ENCODE measurements at regions of chr2 and their contacts with region 1.

Region 1: DNA sequence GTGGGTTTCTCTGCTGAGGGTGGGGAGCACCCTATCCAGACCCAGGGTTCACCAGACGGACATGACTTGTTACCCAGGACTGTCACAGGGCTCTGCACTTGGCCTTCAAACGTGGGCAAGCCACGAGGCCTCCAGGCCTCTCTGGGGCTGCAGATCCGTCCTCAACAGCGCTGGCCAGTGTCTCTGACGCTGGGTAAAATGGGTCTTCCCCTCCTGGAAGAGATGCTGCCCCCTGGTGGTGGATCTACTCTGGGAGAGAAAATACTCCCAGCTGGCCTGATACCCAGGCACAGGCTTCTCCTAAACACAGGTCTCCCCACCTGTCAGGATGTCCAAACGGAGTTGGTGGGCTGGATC is 3.7 kb downstream of the GPR17 start:
- DNase-seq: peak; percentile 74 to 94 (median 83)
- ATAC-seq: peak; percentile 81
- H3K4me3 ChIP-seq: no peak overlapping the region
- H3K4me3 Mint-ChIP-seq: peak overlapping the region; percentile 51
- H3K27ac ChIP-seq: no peak overlapping the region
- H3K27ac Mint-ChIP-seq: peak overlapping the region; percentile 71
- H3K4me1 ChIP-seq: peaks cover 8% of the 10 kb centered on the region
- H3K4me1 Mint-ChIP-seq: peaks cover 21% of the 10 kb centered on the region
- H3K27me3 ChIP-seq: no peaks in the 10 kb centered on the region
- H3K27me3 Mint-ChIP-seq: peaks cover 1% of the 10 kb centered on the region
- CTCF ChIP-seq: peak; percentile 89

Region 2: DNA sequence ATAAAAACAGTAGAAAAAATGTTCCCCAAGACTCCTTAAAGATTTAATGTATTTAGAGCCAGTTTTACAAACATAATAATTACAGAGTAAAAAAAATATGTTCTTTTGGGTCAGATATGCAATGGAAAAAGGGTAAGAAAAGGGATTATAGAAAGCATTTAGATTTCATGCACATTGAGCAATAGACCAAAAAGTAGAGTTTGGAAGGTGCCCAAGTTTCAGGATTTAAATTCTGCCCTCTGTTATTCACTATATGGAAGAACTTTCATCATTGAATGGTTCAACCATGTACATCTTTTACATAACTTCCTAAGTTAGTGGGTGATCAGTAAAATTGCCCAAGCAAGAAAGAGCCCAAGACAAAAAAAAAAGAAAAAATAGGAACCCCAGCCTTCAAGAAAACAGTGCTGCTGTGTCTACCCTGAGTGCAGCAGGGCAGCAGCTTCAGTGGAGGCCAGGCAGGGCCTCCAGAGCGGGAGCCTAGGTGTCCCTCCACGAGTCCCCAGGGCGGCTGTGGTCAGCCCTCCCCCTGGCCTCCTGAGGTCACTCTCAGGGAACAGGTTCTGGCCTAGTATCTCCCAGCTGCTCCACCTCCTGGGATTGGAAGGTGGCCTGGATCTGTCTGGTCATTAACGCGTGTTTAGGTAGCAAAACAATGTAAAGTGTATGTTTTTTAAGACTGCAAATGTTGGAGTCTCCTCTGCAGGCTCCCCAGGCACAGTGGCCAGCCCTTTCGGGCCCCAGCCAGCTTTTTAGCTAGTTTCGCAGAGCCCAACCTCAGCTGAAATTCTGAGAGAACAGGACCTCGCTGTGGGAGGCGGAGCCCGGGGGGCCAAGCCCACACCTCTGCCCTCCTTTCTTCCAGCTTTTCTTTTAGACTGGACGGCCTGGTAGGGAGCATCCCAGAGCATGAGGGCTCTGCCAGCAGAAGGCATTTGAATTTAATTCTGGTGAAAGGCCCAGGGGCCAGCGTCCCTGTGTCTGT is 673.7 kb before region 1 on chr2:
- CTCF ChIA-PET with region 1: no interaction called
- POLR2A ChIA-PET with region 1: no interaction called
- intact Hi-C with region 1: no loop called
- DNase-seq: no peak
- ATAC-seq: no peak
- H3K4me3 ChIP-seq: no peak overlapping the region
- H3K4me3 Mint-ChIP-seq: no peak overlapping the region
- H3K27ac ChIP-seq: no peak overlapping the region
- H3K27ac Mint-ChIP-seq: no peak overlapping the region
- H3K4me1 ChIP-seq: peaks cover 12% of the 10 kb centered on the region
- H3K4me1 Mint-ChIP-seq: peaks cover 8% of the 10 kb centered on the region
- H3K27me3 ChIP-seq: peaks cover 0 to 4% of the 10 kb centered on the region in 2 experiments
- H3K27me3 Mint-ChIP-seq: peaks cover 24% of the 10 kb centered on the region
- CTCF ChIP-seq: no peak

Region 3: DNA sequence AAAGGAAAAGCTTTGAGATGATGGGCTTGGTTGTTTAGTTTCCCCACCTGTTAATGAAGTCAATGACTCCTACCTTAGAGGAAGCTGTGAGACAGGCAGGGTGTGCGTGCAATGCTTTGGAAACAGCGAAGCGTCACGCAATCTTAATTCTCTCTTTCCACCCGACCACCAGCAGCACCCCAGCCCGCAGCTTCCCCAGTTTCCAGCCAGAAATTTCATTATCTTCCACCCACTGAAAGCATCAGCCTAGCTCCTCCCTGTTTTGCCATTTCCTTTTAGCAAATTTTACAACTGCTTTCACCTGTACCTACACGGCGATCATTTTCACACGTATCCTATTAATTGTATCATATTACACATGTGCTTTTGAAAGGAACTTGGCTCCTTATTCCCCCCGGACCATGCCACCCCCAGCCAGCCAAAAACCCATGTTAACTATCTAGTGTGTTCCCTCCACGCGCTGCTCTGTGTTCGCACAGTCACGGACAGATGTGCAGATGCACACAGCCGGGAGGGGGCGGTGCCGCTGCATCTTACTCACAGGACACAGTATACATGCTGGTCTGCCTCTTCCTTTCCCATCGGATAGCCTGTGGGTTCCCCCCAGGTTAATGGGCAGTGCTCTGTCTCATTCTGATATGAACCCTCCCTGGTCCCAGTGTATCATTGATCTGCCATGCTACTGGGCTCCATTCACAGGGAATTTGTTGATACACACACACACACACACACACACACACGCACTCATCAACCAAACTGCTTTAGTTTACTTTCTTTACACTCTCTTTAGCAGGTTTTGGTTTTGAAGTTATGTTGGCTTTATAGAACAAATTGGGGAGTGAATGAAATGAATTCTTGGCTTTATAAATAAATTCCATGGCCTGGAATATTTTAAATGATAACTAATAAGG is 451.9 kb before region 1 on chr2:
- CTCF ChIA-PET with region 1: interaction called, 3 read pairs
- POLR2A ChIA-PET with region 1: no interaction called
- intact Hi-C with region 1: loop called (anchors 1 to 2 kb)
- DNase-seq: peak in 8 of 9 experiments; percentile 18 to 70 (median 54)
- ATAC-seq: peak; percentile 62
- H3K4me3 ChIP-seq: peak overlapping the region in 1 of 2 experiments; percentile 18
- H3K4me3 Mint-ChIP-seq: peak overlapping the region; percentile 69
- H3K27ac ChIP-seq: no peak overlapping the region
- H3K27ac Mint-ChIP-seq: no peak overlapping the region
- H3K4me1 ChIP-seq: no peaks in the 10 kb centered on the region
- H3K4me1 Mint-ChIP-seq: no peaks in the 10 kb centered on the region
- H3K27me3 ChIP-seq: no peaks in the 10 kb centered on the region
- H3K27me3 Mint-ChIP-seq: no peaks in the 10 kb centered on the region
- CTCF ChIP-seq: no peak

Region 4: DNA sequence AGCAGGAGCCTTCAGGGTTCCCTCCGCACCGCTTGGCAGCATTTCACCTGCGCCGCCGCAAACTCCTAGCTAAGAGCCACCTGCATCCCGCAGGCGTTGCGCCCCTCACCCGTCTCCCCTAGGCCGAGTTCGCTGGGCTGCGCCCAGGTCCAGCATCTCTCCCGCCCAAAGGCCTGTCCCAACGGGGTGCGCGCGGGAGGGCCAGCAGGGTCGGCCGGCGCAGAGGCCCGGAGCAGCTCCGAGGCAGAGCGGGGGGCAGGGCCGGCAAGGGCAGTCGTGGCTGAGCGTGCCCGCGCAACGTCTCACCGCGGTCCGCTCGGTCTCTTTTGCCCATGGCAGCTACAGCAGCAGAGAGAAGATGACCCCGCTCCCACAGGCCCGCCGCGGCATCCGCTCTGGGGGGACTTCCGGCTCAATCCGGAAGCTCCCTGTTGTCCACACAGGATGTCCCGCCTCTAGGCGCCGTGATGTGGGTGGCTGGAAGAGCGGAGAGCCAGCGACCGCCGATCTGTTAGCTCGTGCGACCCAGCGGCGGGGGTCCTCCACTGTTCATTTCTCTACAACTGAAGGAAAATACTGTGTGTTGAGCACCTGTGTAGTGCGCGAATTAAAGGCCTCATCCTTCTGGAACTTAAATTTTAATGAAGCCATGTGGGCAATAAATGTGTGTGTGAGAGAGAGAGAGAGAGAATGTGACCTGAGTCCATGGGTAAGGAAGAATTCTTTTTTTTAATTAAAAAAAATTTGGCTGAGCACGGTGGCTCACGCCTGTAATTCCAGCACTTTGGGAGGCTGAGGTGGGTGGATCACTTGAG is 355.7 kb before region 1 on chr2 and contains the start of gene ERCC3:
- CTCF ChIA-PET with region 1: no interaction called
- POLR2A ChIA-PET with region 1: no interaction called
- intact Hi-C with region 1: loop called in 1 of 2 experiments (anchors 10 kb)
- DNase-seq: peak; percentile 56 to 90 (median 83)
- ATAC-seq: peak; percentile 91
- H3K4me3 ChIP-seq: peak within 1 kb of the TSS; percentile 75 to 91
- H3K4me3 Mint-ChIP-seq: peak within 1 kb of the TSS; percentile 94
- H3K27ac ChIP-seq: peak within 1 kb of the TSS; percentile 74 to 76
- H3K27ac Mint-ChIP-seq: peak within 1 kb of the TSS; percentile 91
- H3K4me1 ChIP-seq: peaks cover 13% of the 10 kb centered on the region
- H3K4me1 Mint-ChIP-seq: peaks cover 45% of the 10 kb centered on the region
- H3K27me3 ChIP-seq: no peaks in the 10 kb centered on the region
- H3K27me3 Mint-ChIP-seq: no peaks in the 10 kb centered on the region
- CTCF ChIP-seq: no peak
- total RNA-seq, gene ERCC3: 43.2 to 46.4 TPM

Region 5: GRCh38 chr2:127575185-127575765 is 74.4 kb before region 1 on chr2:
- CTCF ChIA-PET with region 1: interaction called, 6 read pairs
- POLR2A ChIA-PET with region 1: no interaction called
- intact Hi-C with region 1: loop called in 1 of 2 experiments (anchors 1 kb)
- DNase-seq: peak in 1 of 9 experiments; percentile 5
- ATAC-seq: no peak
- H3K4me3 ChIP-seq: no peak overlapping the region
- H3K4me3 Mint-ChIP-seq: peak overlapping the region; percentile 16
- H3K27ac ChIP-seq: no peak overlapping the region
- H3K27ac Mint-ChIP-seq: no peak overlapping the region
- H3K4me1 ChIP-seq: peaks cover 11% of the 10 kb centered on the region
- H3K4me1 Mint-ChIP-seq: peaks cover 16% of the 10 kb centered on the region
- H3K27me3 ChIP-seq: no peaks in the 10 kb centered on the region
- H3K27me3 Mint-ChIP-seq: no peaks in the 10 kb centered on the region
- CTCF ChIP-seq: no peak

Region 6: DNA sequence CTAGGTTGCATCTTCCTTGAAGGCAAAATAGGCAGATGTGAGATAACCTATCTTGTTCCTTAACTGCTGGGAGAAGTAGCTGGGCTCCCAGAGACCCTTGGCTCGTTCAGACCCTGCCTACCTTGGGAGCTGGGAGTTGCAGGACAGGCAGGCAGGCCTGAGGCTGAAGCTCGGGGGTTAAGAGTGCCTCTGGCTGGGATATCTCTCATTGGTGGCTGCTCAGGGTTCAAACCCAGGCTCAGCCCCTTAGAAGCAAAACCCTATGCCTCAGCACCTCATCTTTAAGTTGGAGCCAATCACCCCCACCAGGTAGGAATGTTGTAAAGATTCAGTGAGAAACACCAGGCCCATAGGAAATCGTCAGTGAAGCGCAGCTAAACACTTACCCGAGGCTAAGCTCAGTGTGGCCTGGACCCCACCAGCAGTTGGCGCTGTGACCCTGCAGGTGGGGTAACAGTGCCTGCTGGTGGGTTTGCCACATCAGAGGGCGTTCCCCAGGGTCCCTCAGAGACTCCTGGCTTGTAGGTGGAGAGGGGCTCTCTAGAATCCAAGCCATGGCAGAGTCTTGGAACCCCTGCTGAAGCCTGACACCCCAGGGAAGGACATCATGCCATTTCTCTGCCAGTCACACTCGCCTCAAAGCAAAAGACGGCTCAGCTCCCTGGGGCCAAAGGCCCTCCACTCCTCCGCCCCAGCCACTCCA is 58.3 kb before region 1 on chr2:
- CTCF ChIA-PET with region 1: interaction called, 203 read pairs
- POLR2A ChIA-PET with region 1: interaction called, 13 read pairs
- intact Hi-C with region 1: loop called in 1 of 2 experiments (anchors 1 kb)
- DNase-seq: peak; percentile 30 to 79 (median 66)
- ATAC-seq: peak; percentile 98
- H3K4me3 ChIP-seq: no peak overlapping the region
- H3K4me3 Mint-ChIP-seq: no peak overlapping the region
- H3K27ac ChIP-seq: no peak overlapping the region
- H3K27ac Mint-ChIP-seq: no peak overlapping the region
- H3K4me1 ChIP-seq: no peaks in the 10 kb centered on the region
- H3K4me1 Mint-ChIP-seq: peaks cover 4% of the 10 kb centered on the region
- H3K27me3 ChIP-seq: no peaks in the 10 kb centered on the region
- H3K27me3 Mint-ChIP-seq: no peaks in the 10 kb centered on the region
- CTCF ChIP-seq: peak; percentile 66

Region 7: DNA sequence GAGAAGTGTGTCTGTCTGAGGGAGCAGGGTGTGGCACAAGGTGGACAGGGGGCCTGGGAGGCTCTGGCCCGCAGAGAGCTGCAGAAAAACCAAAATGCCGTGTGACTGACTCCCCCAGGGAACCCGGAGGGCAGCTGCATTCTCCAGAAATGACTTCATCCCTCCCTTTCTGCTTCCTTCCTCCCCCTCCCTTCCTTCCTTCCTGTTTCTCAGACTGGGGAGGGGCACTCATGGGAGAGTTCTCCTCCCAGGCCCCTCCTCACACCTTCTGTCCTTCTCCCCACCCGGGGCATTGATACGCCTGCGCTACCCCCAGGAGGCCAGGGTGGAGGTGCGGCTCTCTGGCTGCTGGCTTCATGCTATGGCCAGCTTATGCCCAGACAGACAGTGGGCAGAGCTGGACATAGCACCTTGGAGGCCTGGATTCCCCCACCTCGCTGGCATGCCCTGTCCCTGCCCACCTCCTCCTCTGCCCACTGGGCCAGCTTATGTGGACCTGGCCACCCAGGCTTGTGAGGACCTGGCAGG is 11.9 kb before region 1 on chr2:
- CTCF ChIA-PET with region 1: interaction called, 19 read pairs
- POLR2A ChIA-PET with region 1: interaction called, 3 read pairs
- intact Hi-C with region 1: no loop called
- DNase-seq: no peak
- ATAC-seq: no peak
- H3K4me3 ChIP-seq: peak overlapping the region in 1 of 2 experiments; percentile 15
- H3K4me3 Mint-ChIP-seq: peak overlapping the region; percentile 43
- H3K27ac ChIP-seq: no peak overlapping the region
- H3K27ac Mint-ChIP-seq: peak overlapping the region; percentile 89
- H3K4me1 ChIP-seq: peaks cover 94% of the 10 kb centered on the region
- H3K4me1 Mint-ChIP-seq: peaks cover 71% of the 10 kb centered on the region
- H3K27me3 ChIP-seq: no peaks in the 10 kb centered on the region
- H3K27me3 Mint-ChIP-seq: no peaks in the 10 kb centered on the region
- CTCF ChIP-seq: no peak

Measured in CD8-positive, alpha-beta T cell (primary cell).